Heart left ventricle (tissue), 16 donors: ENCODE measurements at regions of chr20 and their contacts with region 1.

Region 1: DNA sequence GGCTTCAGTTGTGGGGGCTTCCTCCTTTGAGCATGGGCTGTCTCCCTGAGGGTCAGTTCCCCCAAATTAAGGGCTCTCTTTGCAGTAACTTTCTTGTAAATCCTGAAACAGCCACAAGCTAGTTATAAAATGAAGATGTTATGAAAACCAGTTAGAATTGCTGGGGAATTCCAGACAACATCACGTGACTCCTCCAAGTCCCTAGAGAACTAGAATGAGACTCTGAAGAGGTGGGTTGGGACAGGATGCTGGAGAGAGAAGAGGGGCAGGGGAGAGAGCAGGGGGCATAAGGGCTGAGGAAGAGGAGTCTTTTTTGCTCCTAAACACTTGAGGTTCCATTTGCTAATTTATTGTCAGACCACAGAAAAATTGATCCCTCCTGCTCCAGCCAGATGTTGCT is 380.3 kb downstream of the DHX35 start:
- DNase-seq: no peak
- ATAC-seq: no peak
- H3K4me3 ChIP-seq: no peak overlapping the region
- H3K27ac ChIP-seq: no peak overlapping the region
- H3K4me1 ChIP-seq: peaks cover 0 to 11% (median 1%) of the 10 kb centered on the region in 12 donors
- H3K27me3 ChIP-seq: no peaks in the 10 kb centered on the region
- CTCF ChIP-seq: no peak
- POLR2A ChIP-seq: no peak

Region 2: GRCh38 chr20:39117491-39117890 is 225.0 kb before region 1 on chr20:
- intact Hi-C with region 1: no loop called
- DNase-seq: no peak
- ATAC-seq: no peak
- H3K4me3 ChIP-seq: no peak overlapping the region
- H3K27ac ChIP-seq: no peak overlapping the region
- H3K4me1 ChIP-seq: peaks cover 0 to under 1% (median 0%) of the 10 kb centered on the region in 12 donors
- H3K27me3 ChIP-seq: peaks cover 0 to 17% (median 0%) of the 10 kb centered on the region in 9 donors
- CTCF ChIP-seq: no peak
- POLR2A ChIP-seq: no peak

Region 3: GRCh38 chr20:39190666-39191570 is 151.5 kb before region 1 on chr20:
- intact Hi-C with region 1: loop called in 1 of 10 experiments (anchors 10 kb)
- DNase-seq: no peak
- ATAC-seq: no peak
- H3K4me3 ChIP-seq: no peak overlapping the region
- H3K27ac ChIP-seq: no peak overlapping the region
- H3K4me1 ChIP-seq: no peaks in the 10 kb centered on the region
- H3K27me3 ChIP-seq: peaks cover 0 to 4% (median 0%) of the 10 kb centered on the region in 9 donors
- CTCF ChIP-seq: no peak
- POLR2A ChIP-seq: no peak

Region 4: DNA sequence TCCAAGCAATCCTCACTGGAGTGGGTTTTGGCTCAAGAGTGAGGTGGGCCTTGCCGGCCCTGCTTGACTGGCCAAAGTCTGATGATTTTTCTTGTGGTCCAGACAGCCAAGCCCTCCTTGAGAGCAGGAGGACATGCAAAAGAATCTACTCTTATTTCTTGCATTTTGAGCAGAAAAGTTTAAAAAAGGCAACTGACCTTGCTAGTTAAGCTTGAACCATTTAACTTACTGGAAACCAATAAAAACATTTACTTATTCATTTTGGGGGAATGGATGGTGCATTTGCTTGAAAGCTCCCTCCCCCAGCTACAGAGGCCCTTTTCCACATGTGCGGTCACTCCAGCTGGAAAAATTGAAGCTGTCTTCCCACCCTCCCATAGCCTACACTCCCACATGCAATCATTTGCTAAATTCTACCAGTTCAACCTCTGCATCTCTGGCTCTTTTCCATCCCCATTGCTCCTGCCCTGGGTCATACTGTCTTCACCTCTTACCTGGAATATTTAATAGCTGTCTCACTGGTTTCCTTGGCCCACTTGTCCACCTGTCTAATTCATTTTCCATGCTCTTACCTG is 147.6 kb after region 1 on chr20:
- intact Hi-C with region 1: no loop called
- DNase-seq: no peak
- ATAC-seq: no peak
- H3K4me3 ChIP-seq: no peak overlapping the region
- H3K27ac ChIP-seq: no peak overlapping the region
- H3K4me1 ChIP-seq: peaks cover 0 to 7% (median 0%) of the 10 kb centered on the region in 12 donors
- H3K27me3 ChIP-seq: no peaks in the 10 kb centered on the region
- CTCF ChIP-seq: no peak
- POLR2A ChIP-seq: no peak